Endothelial cell of umbilical vein (primary cell): ENCODE measurements at regions of chr14 and their contacts with region 1.

Region 1: GRCh38 chr14:71753126-71753830 is 179.0 kb upstream of the RGS6 start:
- DNase-seq: peak; percentile 89
- H3K4me3 ChIP-seq: no peak overlapping the region
- H3K27ac ChIP-seq: no peak overlapping the region
- H3K4me1 ChIP-seq: peaks cover 6% of the 10 kb centered on the region
- H3K27me3 ChIP-seq: no peaks in the 10 kb centered on the region
- CTCF ChIP-seq: peak; percentile 91 to 92
- POLR2A ChIP-seq: no peak

Region 2: GRCh38 chr14:71103662-71104484 is 649.4 kb before region 1 on chr14:
- CTCF ChIA-PET with region 1: interaction called, 66 read pairs
- POLR2A ChIA-PET with region 1: no interaction called
- dilution Hi-C with region 1: no loop called
- intact Hi-C with region 1: loop called (anchors 1 kb)
- DNase-seq: peak; percentile 68
- H3K4me3 ChIP-seq: no peak overlapping the region
- H3K27ac ChIP-seq: no peak overlapping the region
- H3K4me1 ChIP-seq: no peaks in the 10 kb centered on the region
- H3K27me3 ChIP-seq: no peaks in the 10 kb centered on the region
- CTCF ChIP-seq: peak; percentile 59 to 67
- POLR2A ChIP-seq: no peak

Region 3: DNA sequence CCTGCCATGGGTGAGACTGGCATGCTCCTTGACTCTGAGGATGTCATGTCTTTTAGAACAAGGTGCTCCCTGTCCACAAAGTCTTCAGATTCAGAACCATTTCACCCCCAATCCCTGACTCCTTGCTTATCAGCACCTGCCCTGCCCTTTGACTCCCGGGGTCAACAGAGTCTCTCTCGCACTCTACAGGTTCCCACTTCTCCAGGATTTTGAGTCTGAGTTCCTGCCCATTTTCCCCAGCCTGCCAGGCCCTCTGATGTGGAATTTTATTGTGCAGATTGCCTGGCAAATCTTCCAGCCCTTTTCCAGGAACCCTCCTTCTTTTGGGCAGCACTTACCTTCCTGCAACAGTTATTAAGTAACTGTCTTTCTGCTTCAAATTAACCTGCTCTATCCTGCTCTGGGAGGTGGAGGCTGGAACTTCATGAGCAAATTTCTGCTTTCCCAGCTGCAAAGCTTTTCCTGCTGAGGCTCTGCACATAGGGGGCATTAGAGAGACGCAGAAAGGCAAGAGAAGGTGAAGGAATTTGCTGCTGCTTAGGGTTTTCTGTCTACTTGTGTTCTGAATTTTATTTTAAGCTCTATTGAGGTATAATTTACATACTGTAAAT is 587.0 kb before region 1 on chr14:
- CTCF ChIA-PET with region 1: interaction called, 12 read pairs
- POLR2A ChIA-PET with region 1: no interaction called
- dilution Hi-C with region 1: no loop called
- intact Hi-C with region 1: no loop called
- DNase-seq: peak; percentile 64
- H3K4me3 ChIP-seq: no peak overlapping the region
- H3K27ac ChIP-seq: no peak overlapping the region
- H3K4me1 ChIP-seq: no peaks in the 10 kb centered on the region
- H3K27me3 ChIP-seq: peaks cover 0 to 1% of the 10 kb centered on the region in 2 experiments
- CTCF ChIP-seq: peak; percentile 13 to 66
- POLR2A ChIP-seq: no peak

Region 4: DNA sequence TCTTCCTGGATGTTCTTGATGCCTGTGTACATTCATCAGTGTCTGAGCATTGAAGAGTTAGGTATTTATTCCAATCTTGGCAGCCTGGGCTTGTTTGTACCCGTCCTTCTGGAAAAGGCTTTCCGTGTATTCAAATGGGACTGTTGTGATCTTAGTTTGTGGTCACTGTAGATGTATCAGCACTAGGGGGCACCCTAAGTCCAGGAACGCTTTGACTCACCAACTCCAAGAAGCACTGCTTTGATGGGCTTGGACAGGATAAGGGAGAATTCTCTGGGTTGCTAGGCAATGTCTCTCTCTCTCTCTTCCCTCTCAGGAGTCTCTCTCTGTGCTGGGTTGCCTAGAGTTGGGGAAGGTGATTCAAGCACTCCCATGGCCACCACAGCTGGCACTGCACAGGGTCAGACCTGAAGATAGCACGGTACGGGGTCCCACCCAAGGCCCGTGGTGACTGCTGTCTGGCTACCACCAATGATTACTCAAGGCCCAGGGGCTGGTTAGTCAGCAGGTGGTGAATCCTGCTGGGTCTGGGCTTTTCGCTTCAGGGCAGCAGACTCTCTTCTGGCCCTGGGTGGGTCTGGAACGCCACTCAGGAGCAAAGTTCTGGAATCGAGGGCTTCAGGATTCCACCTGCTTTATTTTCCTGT is 32.2 kb before region 1 on chr14:
- CTCF ChIA-PET with region 1: interaction called, 26 read pairs
- POLR2A ChIA-PET with region 1: no interaction called
- dilution Hi-C with region 1: no loop called
- intact Hi-C with region 1: loop called (anchors 1 kb)
- DNase-seq: peak; percentile 70
- H3K4me3 ChIP-seq: no peak overlapping the region
- H3K27ac ChIP-seq: no peak overlapping the region
- H3K4me1 ChIP-seq: no peaks in the 10 kb centered on the region
- H3K27me3 ChIP-seq: no peaks in the 10 kb centered on the region
- CTCF ChIP-seq: peak; percentile 70 to 72
- POLR2A ChIP-seq: no peak

Region 5: DNA sequence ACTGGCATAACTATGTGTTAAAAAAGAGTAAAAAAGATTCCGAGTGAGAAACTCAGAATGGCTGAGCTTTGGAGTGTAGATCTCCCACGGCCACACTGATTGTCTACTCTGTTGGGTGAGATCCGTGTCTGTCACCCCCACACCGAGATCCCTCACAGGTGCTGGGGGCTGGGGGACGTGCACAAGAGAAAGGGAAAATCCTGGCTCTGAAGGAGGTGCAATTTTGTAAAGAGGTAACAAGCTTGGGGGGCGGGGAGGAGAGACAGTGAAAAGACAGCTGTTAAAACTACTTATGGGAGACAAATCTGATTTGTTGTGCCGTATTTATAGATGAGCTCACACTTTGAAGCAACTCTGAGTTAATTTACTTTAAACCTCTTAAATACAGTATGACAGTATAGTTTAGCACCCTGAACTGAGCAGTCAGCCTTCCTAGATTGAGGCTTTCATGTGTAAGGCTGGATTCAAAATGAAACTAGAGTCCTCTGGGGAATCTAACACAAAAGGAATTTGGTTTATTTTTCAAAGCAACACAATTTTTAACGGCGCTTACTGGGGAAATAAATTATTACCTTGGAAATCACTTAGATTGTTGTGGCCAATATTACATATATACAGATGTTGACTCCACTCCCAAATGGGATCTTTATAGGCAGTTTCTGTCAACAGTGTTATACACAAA is 11.6 kb after region 1 on chr14:
- CTCF ChIA-PET with region 1: interaction called, 12 read pairs
- POLR2A ChIA-PET with region 1: no interaction called
- dilution Hi-C with region 1: no loop called
- intact Hi-C with region 1: no loop called
- DNase-seq: no peak
- H3K4me3 ChIP-seq: no peak overlapping the region
- H3K27ac ChIP-seq: no peak overlapping the region
- H3K4me1 ChIP-seq: no peaks in the 10 kb centered on the region
- H3K27me3 ChIP-seq: peaks cover 0 to 4% of the 10 kb centered on the region in 2 experiments
- CTCF ChIP-seq: no peak
- POLR2A ChIP-seq: no peak

Region 6: DNA sequence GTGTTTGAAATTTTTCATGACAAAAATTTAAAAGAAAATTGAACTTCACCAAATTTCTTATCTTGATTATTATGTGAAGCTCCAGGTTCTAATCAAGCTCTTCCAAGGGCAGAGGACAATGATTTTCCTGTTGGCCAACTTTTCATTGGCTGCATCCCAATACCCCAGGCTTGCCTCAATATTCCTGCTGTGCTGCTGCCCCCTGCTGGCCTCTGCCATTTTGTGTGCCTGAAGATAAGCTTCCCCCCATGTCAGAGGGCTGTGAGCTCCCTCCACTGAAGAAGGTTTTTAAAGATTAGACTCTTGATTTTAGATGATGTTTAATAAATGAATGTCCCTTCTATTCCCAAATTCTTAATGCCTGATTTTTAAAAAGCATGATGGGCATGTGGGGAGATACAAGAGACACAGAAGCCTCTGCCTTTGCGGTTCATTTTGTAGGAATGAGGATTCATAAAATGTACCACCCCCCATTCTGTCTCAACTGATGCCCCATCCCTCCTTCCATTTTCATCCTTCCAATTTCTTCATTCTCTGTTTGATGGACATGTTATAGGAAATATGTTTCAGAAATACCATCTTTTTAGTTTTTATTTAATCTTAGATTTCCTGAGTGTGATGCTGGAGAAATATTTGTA is 102.2 kb after region 1 on chr14:
- CTCF ChIA-PET with region 1: interaction called, 81 read pairs
- POLR2A ChIA-PET with region 1: no interaction called
- dilution Hi-C with region 1: no loop called
- intact Hi-C with region 1: loop called (anchors 1 kb)
- DNase-seq: peak; percentile 67
- H3K4me3 ChIP-seq: no peak overlapping the region
- H3K27ac ChIP-seq: no peak overlapping the region
- H3K4me1 ChIP-seq: peaks cover 3% of the 10 kb centered on the region
- H3K27me3 ChIP-seq: peaks cover 0 to 2% of the 10 kb centered on the region in 2 experiments
- CTCF ChIP-seq: peak; percentile 73 to 78
- POLR2A ChIP-seq: no peak